ENCODE measurements at regions of chr16 and their contacts with region 1.

Region 1: GRCh38 chr16:67191995-67192681 is at the start of gene E2F4:
- DNase-seq: peak; percentile 91 to 99 (median 93)

Region 2: GRCh38 chr16:67226804-67227557 is 34.8 kb after region 1 on chr16 and contains the start of gene TMEM208:
- intact Hi-C with region 1: loop called (anchors 1 kb)
- DNase-seq: peak; percentile 92 to 99 (median 96)